ENCODE measurements at regions of chr12 and their contacts with region 1.

Region 1: GRCh38 chr12:53295070-53295890 is at the start of gene PFDN5:
- DNase-seq: peak; percentile 89

Region 2: DNA sequence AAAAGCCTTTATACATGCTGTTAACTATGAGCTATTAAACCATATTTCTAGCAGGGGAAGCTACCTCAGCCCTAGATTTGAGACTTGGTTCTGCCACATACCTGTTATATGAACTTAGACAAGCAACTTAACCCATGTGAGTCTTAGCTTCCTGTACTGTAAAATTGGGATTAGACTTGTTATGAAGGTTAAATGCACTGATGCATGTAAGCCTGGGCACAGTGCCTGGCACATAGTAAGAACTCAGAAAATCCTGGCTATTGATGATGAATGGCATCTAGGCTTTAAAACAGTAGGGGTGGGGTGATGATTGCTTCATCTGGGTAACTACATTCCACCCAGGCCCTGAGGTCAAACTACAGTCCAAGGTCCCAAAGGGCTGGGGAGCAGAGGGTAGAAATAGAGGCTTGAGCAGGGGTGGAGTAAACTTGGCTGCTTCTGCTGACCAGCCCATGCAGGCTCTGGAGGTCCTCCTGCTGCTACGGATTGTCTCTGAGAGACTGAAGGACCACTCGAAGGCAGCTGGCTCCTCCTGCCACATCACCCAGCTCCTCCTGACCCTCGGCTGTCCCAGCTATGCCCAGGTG is 15.9 kb before region 1 on chr12:
- CTCF ChIA-PET with region 1: no interaction called
- POLR2A ChIA-PET with region 1: interaction called, 15 read pairs
- DNase-seq: no peak

Region 3: DNA sequence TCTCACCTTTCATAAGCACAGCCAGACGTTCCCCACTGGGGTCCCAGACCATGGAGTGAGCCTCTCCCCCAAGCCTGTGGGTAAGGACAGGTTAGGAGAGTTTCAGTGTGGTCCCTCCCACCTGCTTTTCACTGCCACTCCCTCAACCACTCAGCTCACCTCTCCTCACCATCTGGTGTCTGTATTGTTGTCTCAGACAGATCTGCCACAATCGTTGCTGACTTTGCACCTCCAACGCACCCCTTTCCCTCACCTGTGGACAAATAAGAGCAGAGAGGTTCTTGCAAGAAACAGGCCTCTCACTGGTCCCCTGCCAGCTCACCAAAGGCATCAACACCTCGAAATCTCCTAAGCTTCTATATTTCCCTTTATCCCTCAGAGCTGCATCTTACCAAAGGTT is 13.0 kb after region 1 on chr12:
- CTCF ChIA-PET with region 1: no interaction called
- POLR2A ChIA-PET with region 1: interaction called, 11 read pairs
- DNase-seq: no peak

Measured in HEK293T (cell line).